A673 (cell line): ENCODE measurements at regions of chr2 and their contacts with region 1.

Region 1: GRCh38 chr2:212227755-212228154 is 310.8 kb downstream of the ERBB4 start:
- DNase-seq: peak; percentile 95
- H3K4me3 ChIP-seq: peak overlapping the region; percentile 8
- H3K27ac ChIP-seq: peak overlapping the region; percentile 78
- H3K4me1 ChIP-seq: peaks cover 62% of the 10 kb centered on the region
- H3K27me3 ChIP-seq: no peaks in the 10 kb centered on the region
- CTCF ChIP-seq: no peak

Region 2: DNA sequence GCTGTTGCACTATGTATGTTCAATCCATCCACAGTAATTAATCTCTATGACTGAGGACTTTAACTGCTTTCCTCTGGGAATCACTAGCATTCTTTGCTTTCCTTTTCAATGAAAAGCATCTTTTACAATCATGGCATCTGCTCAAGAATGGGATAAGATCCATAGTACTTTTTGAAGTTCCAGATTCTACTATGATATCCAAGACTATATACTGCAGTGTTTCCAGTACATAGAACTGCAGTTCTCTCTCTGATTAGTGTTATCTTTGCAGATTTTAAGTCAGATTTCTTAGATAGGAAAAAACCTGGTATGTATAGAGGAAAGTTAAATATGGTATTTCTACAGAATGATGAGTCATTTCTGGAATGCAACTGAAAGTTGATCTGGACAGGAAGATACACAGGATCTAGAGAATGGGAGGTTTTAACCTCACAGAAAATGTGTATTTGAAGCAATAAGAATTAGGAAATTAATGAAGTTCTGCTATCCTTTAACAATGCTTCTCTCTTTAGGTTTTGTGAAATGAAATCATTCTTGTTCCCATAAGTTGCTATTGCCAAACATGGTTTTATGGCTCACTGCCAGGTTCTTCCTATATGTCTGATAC is 359.8 kb before region 1 on chr2:
- CTCF ChIA-PET with region 1: no interaction called
- POLR2A ChIA-PET with region 1: interaction called, 10 read pairs
- intact Hi-C with region 1: no loop called
- DNase-seq: peak; percentile 70
- H3K4me3 ChIP-seq: no peak overlapping the region
- H3K27ac ChIP-seq: peak overlapping the region; percentile 49
- H3K4me1 ChIP-seq: peaks cover 14% of the 10 kb centered on the region
- H3K27me3 ChIP-seq: no peaks in the 10 kb centered on the region
- CTCF ChIP-seq: no peak

Region 3: DNA sequence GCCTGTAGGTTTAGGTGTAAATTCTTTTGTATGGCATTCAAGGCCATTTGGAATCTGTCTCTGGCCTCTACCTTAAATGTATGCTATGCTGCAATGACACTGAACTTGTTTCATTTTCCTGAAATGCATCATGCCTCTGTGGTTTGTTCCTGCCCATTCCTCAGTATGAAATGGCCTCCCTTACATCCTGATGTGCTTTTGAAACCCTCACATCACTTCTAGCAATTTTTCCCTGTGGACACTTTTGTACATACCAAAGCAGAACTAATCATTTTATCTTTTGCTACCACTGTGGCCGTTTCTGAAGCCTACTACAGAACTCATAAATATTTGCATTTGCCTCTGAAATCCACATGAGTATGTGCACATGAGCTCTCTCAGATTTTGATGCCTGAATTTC is 246.3 kb before region 1 on chr2:
- CTCF ChIA-PET with region 1: no interaction called
- POLR2A ChIA-PET with region 1: no interaction called
- intact Hi-C with region 1: no loop called
- DNase-seq: no peak
- H3K4me3 ChIP-seq: no peak overlapping the region
- H3K27ac ChIP-seq: no peak overlapping the region
- H3K4me1 ChIP-seq: peaks cover 4% of the 10 kb centered on the region
- H3K27me3 ChIP-seq: no peaks in the 10 kb centered on the region
- CTCF ChIP-seq: no peak